ENCODE measurements at regions of chr1 and their contacts with region 1.

Region 1: DNA sequence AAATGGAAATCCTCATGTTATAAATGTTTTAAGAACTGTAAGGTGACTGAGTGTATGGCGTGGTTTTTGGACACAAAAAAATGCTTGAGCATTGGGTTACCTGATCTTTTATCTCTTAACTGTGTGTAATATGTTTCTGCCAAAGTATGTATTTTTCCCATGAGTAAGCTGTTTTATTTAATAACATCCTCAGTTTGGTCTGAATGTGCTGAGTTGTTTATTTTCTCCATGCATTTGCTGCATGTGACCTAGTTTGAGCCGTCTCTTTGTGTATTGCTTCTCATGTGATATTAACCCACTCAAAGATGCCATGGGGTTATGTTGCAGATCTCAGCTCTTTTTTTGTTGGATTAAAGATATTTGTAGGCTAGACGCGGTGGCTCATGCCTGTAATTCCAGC is 6.1 kb upstream of the LYPLA2 start:
- DNase-seq: no peak
- H3K4me3 ChIP-seq: no peak overlapping the region
- H3K27ac ChIP-seq: no peak overlapping the region
- H3K4me1 ChIP-seq: peaks cover 15% of the 10 kb centered on the region
- H3K27me3 ChIP-seq: no peaks in the 10 kb centered on the region
- CTCF ChIP-seq: no peak

Region 2: DNA sequence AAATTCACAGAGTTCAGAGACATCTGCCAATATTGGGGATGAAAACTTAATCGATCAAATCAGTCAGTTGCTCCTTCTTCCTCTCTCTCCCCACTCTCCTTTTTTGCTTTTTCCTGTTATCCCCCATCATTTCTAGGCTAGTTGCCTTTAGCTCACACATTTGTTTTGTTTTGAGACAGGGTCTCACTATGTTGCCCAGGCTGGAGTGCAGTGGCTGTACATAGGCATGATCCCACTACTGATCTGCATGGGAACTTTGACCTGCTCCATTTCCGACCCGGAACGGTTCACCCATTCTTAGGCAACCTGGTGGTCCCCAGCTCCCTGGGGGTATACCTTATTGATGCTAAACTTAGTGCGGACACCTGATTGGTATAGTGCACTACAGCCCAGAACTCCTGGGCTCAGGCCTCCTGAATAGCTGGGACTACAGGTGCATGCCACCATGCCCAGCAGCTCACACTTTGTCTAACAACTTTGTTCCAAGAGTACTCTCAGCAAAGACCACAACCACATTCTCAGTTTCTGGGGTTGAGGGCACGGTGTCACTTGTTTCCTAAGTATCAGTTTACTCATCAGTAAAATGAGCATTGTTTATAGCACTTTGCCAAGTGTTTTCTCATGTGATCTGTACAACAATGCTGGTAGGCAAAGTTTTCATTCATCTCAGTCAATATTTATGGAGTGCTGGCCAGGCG is 48.3 kb before region 1 on chr1:
- CTCF ChIA-PET with region 1: no interaction called
- dilution Hi-C with region 1: loop called (anchors 5 kb)
- in situ Hi-C with region 1: no loop called
- intact Hi-C with region 1: no loop called
- DNase-seq: no peak
- H3K4me3 ChIP-seq: no peak overlapping the region
- H3K27ac ChIP-seq: no peak overlapping the region
- H3K4me1 ChIP-seq: peaks cover 6% of the 10 kb centered on the region
- H3K27me3 ChIP-seq: no peaks in the 10 kb centered on the region
- CTCF ChIP-seq: no peak

Region 3: GRCh38 chr1:23751050-23751814 is 33.6 kb before region 1 on chr1:
- CTCF ChIA-PET with region 1: no interaction called
- dilution Hi-C with region 1: no loop called
- in situ Hi-C with region 1: no loop called
- intact Hi-C with region 1: no loop called
- DNase-seq: peak; percentile 54
- H3K4me3 ChIP-seq: no peak overlapping the region
- H3K27ac ChIP-seq: no peak overlapping the region
- H3K4me1 ChIP-seq: peaks cover 9% of the 10 kb centered on the region
- H3K27me3 ChIP-seq: no peaks in the 10 kb centered on the region
- CTCF ChIP-seq: peak; percentile 75 to 79